K562 (cell line): ENCODE measurements at regions of chr7 and their contacts with region 1.

Region 1: GRCh38 chr7:118153551-118154177 is 30.3 kb upstream of the LSM8 start:
- DNase-seq: peak; percentile 57 to 68 (median 58)
- ATAC-seq: peak; percentile 77
- H3K4me3 ChIP-seq: no peak overlapping the region
- H3K27ac ChIP-seq: no peak overlapping the region
- H3K4me1 ChIP-seq: no peaks in the 10 kb centered on the region
- H3K27me3 ChIP-seq: no peaks in the 10 kb centered on the region
- CTCF ChIP-seq: peak; percentile 57 to 83 (median 57); a peak in 5 of 6 replicates
- EP300 ChIP-seq: no peak
- POLR2A ChIP-seq: no peak
- RAD21 ChIP-seq: peak; percentile 93 to 94

Region 2: GRCh38 chr7:117399820-117400422 is 753.7 kb before region 1 on chr7:
- CTCF ChIA-PET with region 1: interaction called, 3 read pairs
- POLR2A ChIA-PET with region 1: no interaction called
- in situ Hi-C with region 1: no loop called
- intact Hi-C with region 1: loop called (anchors 1 kb)
- DNase-seq: peak in 1 of 4 experiments; percentile 17
- ATAC-seq: peak; percentile 45; the same call in 1 of the 3 replicates
- H3K4me3 ChIP-seq: no peak overlapping the region
- H3K27ac ChIP-seq: no peak overlapping the region
- H3K4me1 ChIP-seq: no peaks in the 10 kb centered on the region
- H3K27me3 ChIP-seq: no peaks in the 10 kb centered on the region
- CTCF ChIP-seq: peak in 2 of 3 experiments; percentile 21 to 70; a peak in 3 of 6 replicates
- EP300 ChIP-seq: no peak
- POLR2A ChIP-seq: no peak
- RAD21 ChIP-seq: peak; percentile 75

Region 3: GRCh38 chr7:117673839-117674238 is 479.8 kb before region 1 on chr7:
- CTCF ChIA-PET with region 1: interaction called, 4 read pairs
- POLR2A ChIA-PET with region 1: no interaction called
- in situ Hi-C with region 1: no loop called
- intact Hi-C with region 1: loop called (anchors 2 kb)
- DNase-seq: peak in 1 of 4 experiments; percentile 16
- ATAC-seq: peak; percentile 68
- H3K4me3 ChIP-seq: no peak overlapping the region
- H3K27ac ChIP-seq: no peak overlapping the region
- H3K4me1 ChIP-seq: peaks cover 0 to 2% of the 10 kb centered on the region in 2 experiments; a peak in 2 of 5 replicates
- H3K27me3 ChIP-seq: peaks cover 0 to 7% of the 10 kb centered on the region in 2 experiments; a peak in 2 of 5 replicates
- CTCF ChIP-seq: peak in 2 of 3 experiments; percentile 14 to 20; a peak in 3 of 6 replicates
- EP300 ChIP-seq: no peak
- POLR2A ChIP-seq: no peak
- RAD21 ChIP-seq: peak; percentile 36 to 40; a peak in 2 of 4 replicates

Region 4: DNA sequence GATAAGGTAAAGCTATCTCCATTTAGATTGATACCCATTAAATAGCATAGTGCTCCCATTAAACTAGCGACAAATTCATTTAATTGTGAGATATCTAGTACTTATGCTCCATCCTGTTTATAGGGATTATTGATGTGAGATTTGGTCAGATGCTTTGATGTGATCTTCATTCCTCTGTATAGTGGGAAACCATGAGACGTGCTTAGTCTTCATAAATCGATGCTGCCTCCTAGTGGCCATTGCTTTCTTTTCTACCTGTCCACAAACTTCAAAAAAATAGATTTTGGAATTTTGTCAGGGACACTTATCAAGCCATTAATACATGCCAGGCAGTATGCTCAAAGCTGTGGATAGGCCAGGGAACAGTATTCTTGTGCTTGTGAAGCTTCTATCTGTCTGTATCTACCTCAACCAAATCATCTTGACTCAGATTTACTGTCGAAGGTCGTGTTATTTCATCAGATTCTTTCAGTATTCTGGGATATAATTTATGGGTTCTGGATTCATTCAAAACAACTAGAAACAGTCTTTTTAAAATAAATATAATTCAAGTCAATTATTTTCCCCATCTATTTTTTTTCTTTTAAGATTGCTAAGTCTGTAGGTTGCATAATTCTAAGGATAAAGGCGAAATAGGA is 42.3 kb after region 1 on chr7:
- CTCF ChIA-PET with region 1: no interaction called
- POLR2A ChIA-PET with region 1: no interaction called
- in situ Hi-C with region 1: no loop called
- intact Hi-C with region 1: loop called (anchors 5 kb)
- DNase-seq: peak; percentile 55 to 82 (median 58)
- ATAC-seq: peak; percentile 89
- H3K4me3 ChIP-seq: no peak overlapping the region
- H3K27ac ChIP-seq: no peak overlapping the region
- H3K4me1 ChIP-seq: no peaks in the 10 kb centered on the region
- H3K27me3 ChIP-seq: no peaks in the 10 kb centered on the region
- CTCF ChIP-seq: peak; percentile 54 to 88 (median 86)
- EP300 ChIP-seq: no peak
- POLR2A ChIP-seq: no peak; the same call in 1 of the 2 replicates
- RAD21 ChIP-seq: peak; percentile 77 to 82

Region 5: DNA sequence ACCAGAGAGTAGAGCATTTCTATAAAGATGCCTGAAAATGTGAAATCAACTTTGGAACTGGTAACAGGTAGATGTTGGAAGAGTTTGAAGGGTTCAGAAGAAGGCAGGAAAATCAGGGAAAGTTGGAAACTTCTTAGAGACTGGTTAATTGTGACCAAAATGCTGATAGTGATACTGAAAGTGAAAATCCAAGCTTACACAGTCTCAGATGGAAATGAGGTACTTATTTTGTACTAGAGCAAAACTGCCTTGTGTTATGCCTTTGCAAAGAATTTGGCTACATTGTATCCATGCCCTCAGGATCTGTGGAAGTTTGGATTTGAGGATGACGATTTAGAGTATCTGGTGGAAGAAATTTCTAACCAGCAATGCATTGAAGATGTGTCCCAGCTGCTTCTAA is 1688.7 kb after region 1 on chr7:
- CTCF ChIA-PET with region 1: no interaction called
- POLR2A ChIA-PET with region 1: no interaction called
- in situ Hi-C with region 1: no loop called
- intact Hi-C with region 1: no loop called
- DNase-seq: no peak
- ATAC-seq: no peak
- H3K4me3 ChIP-seq: no peak overlapping the region
- H3K27ac ChIP-seq: no peak overlapping the region
- H3K4me1 ChIP-seq: no peaks in the 10 kb centered on the region; a peak in 2 of 5 replicates
- H3K27me3 ChIP-seq: no peaks in the 10 kb centered on the region
- CTCF ChIP-seq: no peak
- EP300 ChIP-seq: no peak
- POLR2A ChIP-seq: no peak
- RAD21 ChIP-seq: no peak